Colonic mucosa (tissue), 4 donors: ENCODE measurements at regions of chr3 and their contacts with region 1.

Region 1: DNA sequence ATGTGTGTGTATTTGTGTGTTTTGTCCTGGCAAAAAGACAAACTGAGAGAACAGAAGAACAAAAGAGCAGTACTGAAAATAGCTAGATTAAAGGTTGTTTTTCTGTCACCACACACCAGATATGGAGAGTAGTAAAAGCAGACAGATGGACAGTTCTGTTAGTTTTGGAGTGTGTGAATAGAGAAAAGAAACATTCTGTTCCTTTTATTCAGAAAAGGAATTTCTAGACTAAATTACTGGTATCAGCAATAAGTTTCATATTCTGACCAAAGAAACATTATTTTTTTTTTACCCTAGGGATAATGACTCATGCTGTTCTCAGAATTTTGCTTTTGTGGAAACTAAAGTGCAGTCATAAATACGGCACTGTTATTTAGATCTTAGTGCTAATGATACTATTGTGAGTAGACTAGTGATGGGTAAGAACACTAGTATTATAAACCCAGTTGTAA is 32.9 kb downstream of the PIK3CA start:
- DNase-seq: no peak
- H3K4me3 ChIP-seq: no peak overlapping the region
- H3K27ac ChIP-seq: no peak overlapping the region
- H3K4me1 ChIP-seq: no peaks in the 10 kb centered on the region
- H3K27me3 ChIP-seq: no peaks in the 10 kb centered on the region
- CTCF ChIP-seq: no peak

Region 2: GRCh38 chr3:178428039-178428438 is 753.0 kb before region 1 on chr3:
- intact Hi-C with region 1: loop called (anchors 5 kb)
- DNase-seq: no peak
- H3K4me3 ChIP-seq: no peak overlapping the region
- H3K27ac ChIP-seq: no peak overlapping the region
- H3K4me1 ChIP-seq: no peaks in the 10 kb centered on the region
- H3K27me3 ChIP-seq: no peaks in the 10 kb centered on the region
- CTCF ChIP-seq: no peak

Region 3: GRCh38 chr3:178875836-178876235 is 305.2 kb before region 1 on chr3:
- intact Hi-C with region 1: no loop called
- DNase-seq: no peak
- H3K4me3 ChIP-seq: no peak overlapping the region
- H3K27ac ChIP-seq: no peak overlapping the region
- H3K4me1 ChIP-seq: no peaks in the 10 kb centered on the region
- H3K27me3 ChIP-seq: no peaks in the 10 kb centered on the region
- CTCF ChIP-seq: no peak